ENCODE measurements at regions of chr2 and their contacts with region 1.

Region 1: GRCh38 chr2:69724540-69725159 is 17.3 kb upstream of the ANXA4 start:
- DNase-seq: peak; percentile 91
- H3K4me3 Mint-ChIP-seq: peak overlapping the region; percentile 48
- H3K27ac Mint-ChIP-seq: no peak overlapping the region
- H3K4me1 Mint-ChIP-seq: peaks cover 4% of the 10 kb centered on the region
- H3K27me3 Mint-ChIP-seq: no peaks in the 10 kb centered on the region

Region 2: DNA sequence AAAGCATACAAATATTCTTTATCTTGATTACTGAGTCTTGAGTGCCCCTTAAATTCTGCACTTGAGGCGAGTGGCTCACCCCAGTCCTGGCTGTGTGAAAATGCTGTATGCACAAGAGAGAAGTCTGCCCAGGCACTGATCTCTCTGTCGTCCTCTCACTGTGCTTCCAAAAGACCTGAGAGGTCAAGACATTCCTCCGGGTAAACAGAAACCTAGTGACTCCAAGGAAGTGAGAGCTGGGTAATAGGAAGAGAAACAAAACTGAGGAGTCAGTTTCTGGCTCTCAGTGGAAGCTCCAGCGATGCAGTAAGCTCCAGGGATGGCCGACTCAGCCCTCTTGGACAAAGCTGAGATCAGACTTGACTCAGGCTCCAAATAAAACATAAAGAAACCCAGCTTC is 152.0 kb before region 1 on chr2:
- CTCF ChIA-PET with region 1: interaction called, 13 read pairs
- POLR2A ChIA-PET with region 1: no interaction called
- intact Hi-C with region 1: no loop called
- DNase-seq: no peak
- H3K4me3 Mint-ChIP-seq: no peak overlapping the region
- H3K27ac Mint-ChIP-seq: peak overlapping the region; percentile 23
- H3K4me1 Mint-ChIP-seq: peaks cover 68% of the 10 kb centered on the region
- H3K27me3 Mint-ChIP-seq: no peaks in the 10 kb centered on the region

Region 3: GRCh38 chr2:69770193-69771146 is 45.8 kb after region 1 on chr2:
- CTCF ChIA-PET with region 1: interaction called, 8 read pairs
- POLR2A ChIA-PET with region 1: no interaction called
- intact Hi-C with region 1: loop called (anchors 10 kb)
- DNase-seq: peak; percentile 42
- H3K4me3 Mint-ChIP-seq: no peak overlapping the region
- H3K27ac Mint-ChIP-seq: peak overlapping the region; percentile 19
- H3K4me1 Mint-ChIP-seq: peaks cover 54% of the 10 kb centered on the region
- H3K27me3 Mint-ChIP-seq: no peaks in the 10 kb centered on the region

Region 4: GRCh38 chr2:69816923-69817542 is 92.4 kb after region 1 on chr2:
- CTCF ChIA-PET with region 1: interaction called, 387 read pairs
- POLR2A ChIA-PET with region 1: interaction called, 4 read pairs
- intact Hi-C with region 1: loop called (anchors 1 kb)
- DNase-seq: peak; percentile 81
- H3K4me3 Mint-ChIP-seq: no peak overlapping the region
- H3K27ac Mint-ChIP-seq: no peak overlapping the region
- H3K4me1 Mint-ChIP-seq: peaks cover 4% of the 10 kb centered on the region
- H3K27me3 Mint-ChIP-seq: no peaks in the 10 kb centered on the region

Region 5: GRCh38 chr2:69902213-69902922 is 177.7 kb after region 1 on chr2:
- CTCF ChIA-PET with region 1: interaction called, 5 read pairs
- POLR2A ChIA-PET with region 1: no interaction called
- intact Hi-C with region 1: loop called (anchors 5 kb)
- DNase-seq: no peak
- H3K4me3 Mint-ChIP-seq: peak overlapping the region; percentile 63
- H3K27ac Mint-ChIP-seq: peak overlapping the region; percentile 69
- H3K4me1 Mint-ChIP-seq: peaks cover 45% of the 10 kb centered on the region
- H3K27me3 Mint-ChIP-seq: no peaks in the 10 kb centered on the region

Region 6: DNA sequence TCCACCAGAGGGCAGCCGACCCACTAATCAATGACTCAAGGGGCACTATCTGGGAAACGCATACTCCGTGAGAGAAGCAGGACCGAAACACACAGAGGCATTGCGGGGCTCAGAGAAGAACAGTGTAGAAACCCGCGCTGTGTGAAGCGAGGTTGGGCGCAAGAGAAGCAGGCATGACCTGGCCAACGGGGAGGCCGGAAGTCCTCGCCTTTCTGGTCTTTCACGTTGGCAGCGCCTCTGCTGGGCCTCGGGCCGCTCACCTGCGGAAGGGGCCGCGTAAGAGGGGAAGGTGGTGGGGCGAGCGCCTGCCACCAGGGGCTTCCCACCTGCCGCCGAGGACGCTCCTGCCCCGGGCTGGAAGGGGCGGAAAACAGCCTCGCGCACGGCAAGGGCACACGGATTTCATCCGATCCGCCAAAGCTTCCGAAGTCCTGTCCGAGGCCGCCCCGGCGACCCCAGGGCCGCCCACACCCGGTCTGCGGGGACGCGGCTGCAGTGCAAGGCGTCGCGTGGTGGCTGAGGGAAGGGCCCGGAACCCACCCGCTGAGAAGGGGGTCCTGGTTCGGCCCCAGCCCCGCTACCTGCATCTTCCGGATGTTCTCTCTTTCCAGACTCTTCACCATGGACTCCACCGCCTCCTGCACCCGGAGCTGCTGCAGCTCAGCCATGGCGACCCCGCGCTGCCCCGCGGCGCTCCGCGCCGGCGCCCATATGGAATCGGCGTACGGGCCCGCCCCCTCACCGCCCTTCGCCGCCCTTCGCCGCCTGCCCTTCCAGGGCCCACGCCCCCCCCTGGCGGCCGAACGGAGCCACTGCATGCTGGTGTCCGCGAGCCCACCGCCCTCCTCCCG is 576.9 kb after region 1 on chr2 and contains the start of gene FAM136A:
- CTCF ChIA-PET with region 1: interaction called, 5 read pairs
- POLR2A ChIA-PET with region 1: no interaction called
- intact Hi-C with region 1: loop called (anchors 2 kb)
- DNase-seq: peak; percentile 93
- H3K4me3 Mint-ChIP-seq: peak within 1 kb of the TSS; percentile 86
- H3K27ac Mint-ChIP-seq: peak within 1 kb of the TSS; percentile 92
- H3K4me1 Mint-ChIP-seq: peaks cover 27% of the 10 kb centered on the region
- H3K27me3 Mint-ChIP-seq: no peaks in the 10 kb centered on the region
- total RNA-seq, gene FAM136A: 48.0 to 49.8 TPM

Measured in activated CD4-positive, alpha-beta memory T cell treated with anti-CD3 and anti-CD28 coated beads for 36 hours (primary cell).